ENCODE measurements at regions of chrX and their contacts with region 1.

Region 1: GRCh38 chrX:102659790-102660757 is 8.8 kb downstream of the GPRASP1 start:
- DNase-seq: peak; percentile 65
- CTCF ChIP-seq: no peak

Region 2: GRCh38 chrX:102720237-102721168 is 60.4 kb after region 1 on chrX and contains the start of gene GPRASP3:
- in situ Hi-C with region 1: loop called (anchors 10 kb)
- DNase-seq: peak; percentile 56
- CTCF ChIP-seq: no peak

Region 3: DNA sequence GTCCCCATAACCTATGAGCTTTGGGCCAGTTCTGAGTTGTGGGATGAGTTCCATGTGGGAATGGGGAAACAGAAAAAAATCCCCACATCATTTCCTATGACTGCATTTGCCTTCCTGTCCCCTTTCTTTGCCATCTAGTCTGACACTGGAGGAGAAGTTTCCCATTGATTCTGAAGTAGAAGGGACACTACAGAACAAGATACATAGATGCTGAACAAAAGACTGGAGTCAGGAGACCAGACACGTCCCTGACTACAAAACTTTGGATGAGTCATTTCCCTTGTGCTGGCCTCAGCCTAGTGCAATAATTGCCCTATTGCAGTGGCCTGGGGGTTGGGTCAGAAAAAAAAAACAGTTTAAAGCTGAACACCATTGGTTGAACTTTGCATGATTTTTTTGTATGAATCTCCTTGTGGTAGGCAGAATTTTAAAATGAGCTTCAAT is 738.4 kb after region 1 on chrX:
- in situ Hi-C with region 1: no loop called
- DNase-seq: no peak
- CTCF ChIP-seq: no peak